Activated T-helper 2 cell treated with anti-CD3 and anti-CD28 coated beads, Interferon-gamma antibody, Interleukin-2, Interleukin-4, amounts not matched to agents 10 μg/mL and 5 μg/mL and 100 μg/mL, durations not matched to agents 14 hours and 24 hours and 36 hours (primary cell): ENCODE measurements at regions of chr12 and their contacts with region 1.

Region 1: GRCh38 chr12:89597770-89598169 is 71.9 kb upstream of the POC1B start:
- DNase-seq: no peak
- H3K4me3 Mint-ChIP-seq: no peak overlapping the region
- H3K27ac Mint-ChIP-seq: no peak overlapping the region
- H3K4me1 Mint-ChIP-seq: peaks cover 13% of the 10 kb centered on the region
- H3K27me3 Mint-ChIP-seq: peaks cover 5% of the 10 kb centered on the region

Region 2: DNA sequence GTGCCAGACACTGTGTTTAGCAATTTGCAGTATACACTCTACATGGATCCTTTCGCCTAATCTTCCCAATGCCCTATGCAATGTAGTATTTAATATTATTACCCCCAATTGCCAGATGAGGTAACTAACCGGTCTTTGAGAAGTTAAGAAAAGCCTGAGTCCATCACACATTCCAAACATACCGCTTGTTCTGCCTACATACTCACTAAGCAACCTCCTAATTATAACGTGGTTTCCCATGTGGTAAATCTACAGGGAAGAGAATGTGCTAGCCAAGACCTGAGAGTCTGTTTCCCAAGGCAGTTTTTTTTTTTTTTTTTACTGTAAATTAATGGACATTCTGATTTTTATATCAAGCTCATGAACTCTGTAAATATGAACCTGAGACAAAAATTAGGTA is 73.7 kb after region 1 on chr12:
- intact Hi-C with region 1: loop called (anchors 5 kb)
- DNase-seq: no peak
- H3K4me3 Mint-ChIP-seq: no peak overlapping the region
- H3K27ac Mint-ChIP-seq: no peak overlapping the region
- H3K4me1 Mint-ChIP-seq: peaks cover 25% of the 10 kb centered on the region
- H3K27me3 Mint-ChIP-seq: no peaks in the 10 kb centered on the region